CD8-positive, alpha-beta T cell (primary cell): ENCODE measurements at regions of chr21 and their contacts with region 1.

Region 1: DNA sequence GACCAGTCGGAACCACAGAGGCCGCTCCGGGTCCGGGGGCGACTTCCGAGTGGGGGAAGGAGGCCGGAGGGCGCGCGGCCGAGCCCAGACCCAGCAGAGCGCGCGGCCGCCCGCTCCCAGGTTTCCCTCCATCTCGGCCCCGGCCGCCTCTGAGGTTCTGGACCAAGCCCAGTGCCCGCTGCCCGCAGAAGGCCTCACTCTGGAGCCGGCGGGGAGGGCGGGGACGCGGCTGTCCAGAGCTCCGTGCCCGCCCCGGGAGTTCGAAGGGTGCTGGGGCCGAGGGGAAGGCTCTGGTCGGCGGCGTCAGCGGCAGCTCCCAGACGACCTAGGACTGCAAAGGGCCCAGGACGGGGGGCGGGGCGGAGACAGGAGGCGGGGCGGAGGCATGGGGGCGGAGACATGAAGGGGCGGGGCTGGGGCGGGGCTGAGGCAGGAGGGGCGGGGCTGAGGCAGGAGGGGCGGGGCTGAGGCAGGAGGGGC is 48.0 kb upstream of the SLC19A1 start:
- DNase-seq: peak; percentile 44 to 82 (median 71)
- ATAC-seq: peak; percentile 67
- H3K4me3 ChIP-seq: peak overlapping the region; percentile 41 to 44
- H3K4me3 Mint-ChIP-seq: peak overlapping the region; percentile 46
- H3K27ac ChIP-seq: no peak overlapping the region
- H3K27ac Mint-ChIP-seq: no peak overlapping the region
- H3K4me1 ChIP-seq: peaks cover 28% of the 10 kb centered on the region
- H3K4me1 Mint-ChIP-seq: peaks cover 10% of the 10 kb centered on the region
- H3K27me3 ChIP-seq: peaks cover 0 to 16% of the 10 kb centered on the region in 2 experiments
- H3K27me3 Mint-ChIP-seq: peaks cover 3% of the 10 kb centered on the region
- CTCF ChIP-seq: no peak

Region 2: GRCh38 chr21:45542242-45542666 is 48.0 kb before region 1 on chr21 and contains the start of gene SLC19A1:
- CTCF ChIA-PET with region 1: no interaction called
- POLR2A ChIA-PET with region 1: no interaction called
- intact Hi-C with region 1: loop called (anchors 1 kb)
- DNase-seq: peak; percentile 42 to 87 (median 67)
- ATAC-seq: peak; percentile 86
- H3K4me3 ChIP-seq: peak within 1 kb of the TSS; percentile 45 to 57
- H3K4me3 Mint-ChIP-seq: peak within 1 kb of the TSS; percentile 72
- H3K27ac ChIP-seq: peak within 1 kb of the TSS; percentile 30 to 54
- H3K27ac Mint-ChIP-seq: no peak within 1 kb of the TSS
- H3K4me1 ChIP-seq: peaks cover 17% of the 10 kb centered on the region
- H3K4me1 Mint-ChIP-seq: peaks cover 14% of the 10 kb centered on the region
- H3K27me3 ChIP-seq: no peaks in the 10 kb centered on the region
- H3K27me3 Mint-ChIP-seq: no peaks in the 10 kb centered on the region
- CTCF ChIP-seq: peak; percentile 40
- total RNA-seq, gene SLC19A1: 8.8 to 9.0 TPM

Region 3: GRCh38 chr21:45554477-45555175 is 35.7 kb before region 1 on chr21:
- CTCF ChIA-PET with region 1: no interaction called
- POLR2A ChIA-PET with region 1: no interaction called
- intact Hi-C with region 1: loop called in 1 of 2 experiments (anchors 1 kb)
- DNase-seq: peak; percentile 80 to 97 (median 91)
- ATAC-seq: peak; percentile 90
- H3K4me3 ChIP-seq: peak overlapping the region; percentile 73 to 81
- H3K4me3 Mint-ChIP-seq: peak overlapping the region; percentile 91
- H3K27ac ChIP-seq: peak overlapping the region; percentile 37 to 60
- H3K27ac Mint-ChIP-seq: peak overlapping the region; percentile 91
- H3K4me1 ChIP-seq: peaks cover 38% of the 10 kb centered on the region
- H3K4me1 Mint-ChIP-seq: peaks cover 31% of the 10 kb centered on the region
- H3K27me3 ChIP-seq: no peaks in the 10 kb centered on the region
- H3K27me3 Mint-ChIP-seq: no peaks in the 10 kb centered on the region
- CTCF ChIP-seq: peak; percentile 60

Region 4: DNA sequence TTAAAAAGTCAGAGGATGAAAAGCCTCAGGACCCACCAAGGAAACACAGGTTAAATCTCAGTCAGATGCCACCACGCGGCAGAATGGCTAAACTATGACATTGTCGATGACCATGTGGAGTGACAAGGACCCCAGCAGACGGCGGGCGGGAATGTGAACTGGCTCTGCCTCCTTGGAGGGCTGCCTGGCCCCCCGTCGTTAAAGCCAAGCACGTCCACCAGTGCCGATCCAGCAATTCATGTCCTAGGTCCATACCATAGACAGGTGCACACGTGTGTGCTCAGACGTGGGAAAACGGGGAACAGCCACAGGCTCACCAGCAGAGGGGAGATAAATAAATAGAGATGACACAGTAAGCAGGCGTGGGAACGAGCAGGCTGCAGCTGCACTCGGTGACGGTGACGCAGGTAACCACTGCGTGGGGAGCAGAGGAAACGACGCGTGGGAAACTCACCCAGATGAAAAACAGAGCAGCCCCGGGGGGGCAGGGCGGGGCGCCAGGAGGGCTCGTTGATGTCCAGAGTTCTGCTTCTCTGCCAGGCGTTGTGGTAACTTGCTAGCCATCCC is 24.9 kb after region 1 on chr21:
- CTCF ChIA-PET with region 1: no interaction called
- POLR2A ChIA-PET with region 1: no interaction called
- intact Hi-C with region 1: loop called in 1 of 2 experiments (anchors 1 kb)
- DNase-seq: peak; percentile 68 to 97 (median 89)
- ATAC-seq: peak; percentile 89
- H3K4me3 ChIP-seq: peak overlapping the region; percentile 46 to 51
- H3K4me3 Mint-ChIP-seq: peak overlapping the region; percentile 81
- H3K27ac ChIP-seq: peak overlapping the region; percentile 55 to 96
- H3K27ac Mint-ChIP-seq: peak overlapping the region; percentile 98
- H3K4me1 ChIP-seq: peaks cover 26% of the 10 kb centered on the region
- H3K4me1 Mint-ChIP-seq: peaks cover 36% of the 10 kb centered on the region
- H3K27me3 ChIP-seq: peaks cover 0 to 4% of the 10 kb centered on the region in 2 experiments
- H3K27me3 Mint-ChIP-seq: no peaks in the 10 kb centered on the region
- CTCF ChIP-seq: peak; percentile 43

Region 5: GRCh38 chr21:45768751-45769070 is 178.4 kb after region 1 on chr21:
- CTCF ChIA-PET with region 1: no interaction called
- POLR2A ChIA-PET with region 1: no interaction called
- intact Hi-C with region 1: loop called in 1 of 2 experiments (anchors 5 kb)
- DNase-seq: peak in 1 of 9 experiments; percentile 21
- ATAC-seq: no peak
- H3K4me3 ChIP-seq: no peak overlapping the region
- H3K4me3 Mint-ChIP-seq: no peak overlapping the region
- H3K27ac ChIP-seq: no peak overlapping the region
- H3K27ac Mint-ChIP-seq: peak overlapping the region; percentile 91
- H3K4me1 ChIP-seq: peaks cover 27% of the 10 kb centered on the region
- H3K4me1 Mint-ChIP-seq: peaks cover 32% of the 10 kb centered on the region
- H3K27me3 ChIP-seq: no peaks in the 10 kb centered on the region
- H3K27me3 Mint-ChIP-seq: no peaks in the 10 kb centered on the region
- CTCF ChIP-seq: no peak